Cardiac septum (tissue), 1 donor: ENCODE measurements at regions of chr12 and their contacts with region 1.

Region 1: GRCh38 chr12:120495723-120496412 is at the start of gene DYNLL1:
- DNase-seq: peak; percentile 98
- total RNA-seq, gene DYNLL1: 243 TPM

Region 2: DNA sequence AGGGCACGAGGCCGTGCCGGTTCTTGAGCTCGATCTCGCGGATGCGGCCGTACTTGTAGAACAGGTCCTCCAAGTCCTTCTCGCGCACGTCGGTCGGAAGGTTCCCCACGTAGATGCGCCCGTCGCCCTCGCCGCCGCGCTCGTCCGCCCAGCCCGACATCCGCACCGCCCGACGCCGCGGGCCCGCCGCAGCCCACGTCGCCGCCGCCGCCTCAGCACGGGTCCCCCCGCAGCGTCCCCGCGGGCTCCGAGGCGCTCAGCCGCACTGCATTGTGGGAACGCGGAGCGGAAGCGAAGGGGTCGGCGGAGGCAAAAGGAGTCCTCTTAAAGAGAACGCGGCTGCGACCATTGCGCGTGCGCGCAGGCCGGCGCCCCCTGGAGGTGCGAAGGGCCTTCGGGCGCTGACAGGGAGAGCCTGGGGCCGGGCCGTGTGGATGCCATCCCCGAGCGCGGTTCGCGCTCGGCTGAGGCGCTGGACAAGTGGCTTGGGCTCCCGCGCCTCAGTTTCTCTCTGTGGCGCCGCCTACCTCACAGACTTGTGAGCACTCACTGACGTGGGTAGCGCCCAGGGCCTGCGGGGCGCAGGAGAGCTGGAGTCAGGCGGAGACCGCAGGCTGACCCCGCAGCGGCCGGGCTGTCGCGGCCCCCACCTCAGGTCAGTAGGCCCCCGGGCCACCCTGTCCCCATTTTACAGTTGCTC is 26.3 kb before region 1 on chr12 and contains the start of gene SRSF9:
- intact Hi-C with region 1: loop called (anchors 1 kb)
- DNase-seq: peak; percentile 98
- total RNA-seq, gene SRSF9: 38.6 TPM

Region 3: GRCh38 chr12:120534203-120534702 is 38.4 kb after region 1 on chr12 and contains the start of gene RNF10:
- intact Hi-C with region 1: loop called (anchors 5 kb)
- DNase-seq: peak; percentile 87
- total RNA-seq, gene RNF10: 249 TPM

Region 4: GRCh38 chr12:121240484-121241101 is 744.7 kb after region 1 on chr12:
- intact Hi-C with region 1: no loop called
- DNase-seq: peak; percentile 80